ENCODE measurements at regions of chr11 and their contacts with region 1.

Region 1: GRCh38 chr11:95699631-95700470 is 89.7 kb downstream of the FAM76B start:
- DNase-seq: no peak

Region 2: DNA sequence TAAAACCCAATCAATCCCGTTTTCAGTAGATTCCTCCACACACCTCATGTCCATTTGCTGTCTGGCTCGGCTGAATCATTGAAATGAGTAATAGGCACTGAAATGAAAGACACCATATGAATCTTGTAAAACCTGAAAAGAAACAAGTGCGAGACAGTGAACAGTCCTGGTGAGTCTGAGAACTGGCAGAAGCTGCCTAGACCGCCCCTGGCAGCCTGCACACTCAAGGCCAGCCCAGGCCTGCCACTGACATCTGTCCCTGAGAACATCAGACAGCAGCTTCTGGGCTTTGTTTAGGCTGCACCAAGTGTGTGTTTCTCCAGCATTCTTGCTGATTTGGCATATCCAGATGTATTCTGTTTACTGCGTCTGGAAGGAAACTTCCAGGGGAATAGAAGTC is 565.4 kb before region 1 on chr11:
- intact Hi-C with region 1: no loop called
- DNase-seq: peak in 7 of 10 donors; percentile 19 to 88 (median 51)

Region 3: DNA sequence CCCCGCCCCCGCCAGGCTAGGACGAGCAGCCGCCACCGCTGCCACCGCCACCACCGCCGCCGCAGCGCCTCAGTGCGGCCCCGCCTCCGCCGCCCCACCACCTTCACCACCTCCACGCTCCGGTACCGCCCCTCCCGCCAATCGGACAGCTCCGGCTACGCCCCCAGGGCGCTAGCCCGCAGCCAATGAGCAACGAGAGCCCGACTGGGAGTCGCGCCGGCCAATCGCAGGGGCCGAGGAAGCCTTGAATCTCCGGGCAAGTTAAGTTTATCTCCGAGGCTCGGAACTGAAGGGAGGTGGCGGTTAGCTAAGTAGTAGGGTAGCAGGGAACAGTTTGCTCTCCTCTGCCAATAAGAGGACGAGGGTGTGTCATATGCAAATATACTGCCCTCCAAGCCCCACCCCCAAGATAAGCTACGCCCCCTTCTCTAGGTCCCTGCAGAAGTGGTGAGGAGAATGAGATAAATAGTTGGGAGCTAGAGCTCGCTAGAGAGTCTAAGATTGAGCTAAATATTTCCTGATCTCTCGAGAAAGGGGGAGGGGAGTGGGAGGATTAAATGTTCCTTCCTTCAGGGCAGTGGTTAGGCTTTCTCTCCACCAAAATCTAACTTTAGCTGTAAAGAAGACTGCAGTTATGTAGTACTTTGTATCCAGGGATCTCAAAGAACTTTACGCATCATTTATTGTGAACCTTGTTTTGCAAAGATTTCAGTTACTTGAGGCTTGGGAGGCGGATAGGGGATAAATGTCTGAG is 468.5 kb before region 1 on chr11 and contains the start of gene SESN3:
- intact Hi-C with region 1: loop called (anchors 5 kb)
- DNase-seq: peak; percentile 94 to 100 (median 99)

Region 4: GRCh38 chr11:95567685-95568084 is 132.2 kb before region 1 on chr11:
- intact Hi-C with region 1: loop called (anchors 5 kb)
- DNase-seq: no peak

Measured in posterior cingulate gyrus (tissue), 11 donors.